Activated B cell treated with CpG ODN at 0.5 μM for 24 hours (primary cell): ENCODE measurements at regions of chr12 and their contacts with region 1.

Region 1: GRCh38 chr12:66188584-66189485 is at the start of gene IRAK3:
- DNase-seq: peak; percentile 48
- ATAC-seq: peak; percentile 59
- H3K4me3 Mint-ChIP-seq: peak within 1 kb of the TSS; percentile 79
- H3K27ac Mint-ChIP-seq: peak within 1 kb of the TSS; percentile 38
- H3K4me1 Mint-ChIP-seq: peaks cover 34% of the 10 kb centered on the region
- H3K27me3 Mint-ChIP-seq: peaks cover 21% of the 10 kb centered on the region
- CTCF ChIP-seq: no peak
- total RNA-seq, gene IRAK3: 5.6 and 6.6 TPM in 2 replicates

Region 2: GRCh38 chr12:66130277-66131066 is 58.4 kb before region 1 on chr12 and contains the start of gene LLPH:
- CTCF ChIA-PET with region 1: no interaction called
- POLR2A ChIA-PET with region 1: no interaction called
- intact Hi-C with region 1: loop called (anchors 1 kb)
- DNase-seq: peak; percentile 78
- ATAC-seq: peak; percentile 94
- H3K4me3 Mint-ChIP-seq: peak within 1 kb of the TSS; percentile 99
- H3K27ac Mint-ChIP-seq: peak within 1 kb of the TSS; percentile 96
- H3K4me1 Mint-ChIP-seq: peaks cover 43% of the 10 kb centered on the region
- H3K27me3 Mint-ChIP-seq: no peaks in the 10 kb centered on the region
- CTCF ChIP-seq: no peak
- total RNA-seq, gene LLPH: 29.5 and 35.5 TPM in 2 replicates

Region 3: DNA sequence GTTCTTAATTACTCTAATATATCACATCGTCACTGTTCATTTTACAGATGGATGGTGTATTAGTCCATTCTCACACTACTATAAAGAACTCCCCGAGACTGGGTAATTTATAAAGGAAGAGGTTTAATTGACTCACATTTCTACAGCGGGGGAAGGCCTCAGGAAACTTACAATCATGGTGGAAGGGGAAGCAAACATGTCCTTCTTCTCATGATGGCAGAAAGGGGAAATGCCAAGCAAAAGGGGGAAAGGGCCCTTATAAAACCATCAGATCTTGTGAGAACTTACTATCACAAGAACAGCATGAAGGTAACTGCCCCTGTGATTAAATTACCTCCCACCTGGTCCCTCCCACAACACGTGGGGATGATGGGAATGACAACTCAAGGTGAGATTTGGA is 25.5 kb before region 1 on chr12:
- CTCF ChIA-PET with region 1: no interaction called
- POLR2A ChIA-PET with region 1: no interaction called
- intact Hi-C with region 1: no loop called
- DNase-seq: no peak
- ATAC-seq: no peak
- H3K4me3 Mint-ChIP-seq: no peak overlapping the region
- H3K27ac Mint-ChIP-seq: no peak overlapping the region
- H3K4me1 Mint-ChIP-seq: peaks cover 76% of the 10 kb centered on the region
- H3K27me3 Mint-ChIP-seq: no peaks in the 10 kb centered on the region
- CTCF ChIP-seq: no peak